Sciatic nerve (tissue), 2 donors: ENCODE measurements at regions of chr9 and their contacts with region 1.

Region 1: DNA sequence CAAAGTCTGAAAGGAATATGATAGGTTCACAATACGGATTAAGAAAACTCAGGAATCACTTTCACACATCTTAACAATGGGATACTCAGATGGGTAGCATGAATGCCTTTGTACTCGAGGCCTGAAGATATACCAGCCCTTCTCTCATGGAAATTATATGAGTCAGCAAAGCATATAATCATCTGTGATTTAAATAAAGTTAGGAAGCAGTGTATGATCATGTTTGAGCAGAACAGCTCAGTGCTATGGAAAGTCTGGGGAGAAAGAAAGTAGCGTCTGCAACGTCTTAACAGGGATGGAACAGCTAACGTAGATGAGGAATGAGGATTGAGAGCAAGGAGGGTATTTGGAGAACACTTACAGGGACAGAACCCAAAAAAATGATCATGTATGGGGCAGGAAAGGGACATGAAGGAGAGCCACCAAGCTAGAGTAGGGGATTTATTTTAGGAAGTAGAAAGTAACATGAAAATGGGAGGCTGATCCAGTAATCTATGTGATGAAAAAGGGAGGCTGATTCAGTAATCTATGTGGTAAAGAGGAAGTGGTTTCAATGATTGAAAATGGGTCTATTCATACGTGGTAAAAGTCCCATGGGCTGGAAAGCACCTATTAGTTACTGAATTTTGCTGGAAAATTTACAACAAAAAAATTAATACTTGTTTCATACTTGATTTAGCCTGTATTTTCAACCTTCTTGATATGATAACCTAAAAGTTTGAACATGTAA is 85.9 kb downstream of the GNA14 start:
- DNase-seq: no peak
- ATAC-seq: no peak

Region 2: DNA sequence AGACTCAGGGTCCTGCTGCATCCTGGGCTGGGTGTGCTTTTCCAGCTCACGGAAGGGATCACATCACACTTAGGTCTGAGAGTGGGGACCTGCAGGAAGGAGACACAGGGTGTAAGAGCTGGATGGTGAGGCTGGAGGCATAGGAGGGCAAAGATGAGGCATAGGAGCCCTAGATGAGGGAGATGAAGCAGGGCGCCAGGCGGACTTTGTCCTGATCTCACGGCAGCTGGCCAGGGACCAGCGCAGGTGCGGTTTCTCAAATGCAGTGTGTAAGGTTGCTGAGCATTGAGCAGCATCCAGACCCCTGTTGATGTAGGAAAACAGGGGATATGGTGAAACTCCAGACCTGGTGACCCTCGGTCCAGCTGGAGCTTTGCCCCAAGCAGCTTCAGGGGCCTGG is 891.3 kb after region 1 on chr9:
- intact Hi-C with region 1: no loop called
- DNase-seq: no peak
- ATAC-seq: no peak

Region 3: GRCh38 chr9:79079212-79079611 is 1517.0 kb after region 1 on chr9:
- intact Hi-C with region 1: loop called (anchors 5 kb)
- DNase-seq: no peak
- ATAC-seq: no peak